Activated CD4-positive, alpha-beta T cell treated with anti-CD3 and anti-CD28 coated beads, Interleukin-2, amount 10 ng/mL, durations not matched to agents 24 days and 14 days (primary cell): ENCODE measurements at regions of chr19 and their contacts with region 1.

Region 1: GRCh38 chr19:32570081-32570785 is 10.8 kb upstream of the PDCD5 start:
- DNase-seq: peak; percentile 83
- H3K4me3 Mint-ChIP-seq: no peak overlapping the region
- H3K27ac Mint-ChIP-seq: no peak overlapping the region
- H3K4me1 Mint-ChIP-seq: peaks cover 7% of the 10 kb centered on the region
- H3K27me3 Mint-ChIP-seq: peaks cover 14% of the 10 kb centered on the region

Region 2: GRCh38 chr19:32339988-32340874 is 230.0 kb before region 1 on chr19:
- intact Hi-C with region 1: loop called (anchors 1 kb)
- DNase-seq: peak; percentile 83
- H3K4me3 Mint-ChIP-seq: no peak overlapping the region
- H3K27ac Mint-ChIP-seq: no peak overlapping the region
- H3K4me1 Mint-ChIP-seq: peaks cover 3% of the 10 kb centered on the region
- H3K27me3 Mint-ChIP-seq: peaks cover 8% of the 10 kb centered on the region

Region 3: DNA sequence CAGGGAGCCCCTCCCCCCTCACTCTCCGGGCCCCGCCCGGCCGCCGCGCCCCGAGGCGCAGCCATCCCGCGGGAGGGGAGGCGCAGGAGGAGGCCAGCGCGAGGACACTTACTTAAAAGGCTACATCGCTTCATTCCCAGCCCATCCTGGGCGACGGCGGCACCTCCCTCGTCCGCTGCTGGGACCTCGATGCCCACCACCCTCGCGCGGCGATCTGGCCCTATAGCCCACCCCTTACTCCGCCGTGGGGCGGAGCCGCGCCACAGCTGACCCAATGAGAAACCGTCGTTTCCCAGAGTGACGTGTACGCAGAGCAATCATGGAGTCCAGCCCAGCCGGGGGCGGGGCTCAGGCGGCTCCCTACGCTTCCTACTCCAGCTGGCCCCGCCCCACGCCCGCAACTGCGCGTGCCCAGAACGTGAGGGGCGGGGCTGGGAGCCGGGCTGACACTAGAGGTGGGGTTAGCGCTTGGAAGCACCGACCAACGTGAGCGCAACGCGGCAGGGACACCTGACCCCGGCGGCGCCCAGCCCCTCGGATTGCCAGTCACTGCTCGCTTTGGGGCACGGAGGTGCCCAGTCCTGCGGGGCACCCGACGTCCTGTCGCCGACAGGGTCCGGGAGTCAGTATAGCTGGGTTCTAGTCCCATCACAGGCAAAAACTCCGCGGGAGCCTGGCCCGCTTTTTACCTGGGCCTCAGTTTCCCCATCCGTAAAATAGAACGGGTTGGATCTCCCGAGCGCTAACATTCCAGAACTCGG is 104.9 kb after region 1 on chr19 and contains the start of gene ANKRD27:
- intact Hi-C with region 1: no loop called
- DNase-seq: peak; percentile 100
- H3K4me3 Mint-ChIP-seq: peak within 1 kb of the TSS; percentile 95
- H3K27ac Mint-ChIP-seq: peak within 1 kb of the TSS; percentile 88
- H3K4me1 Mint-ChIP-seq: peaks cover 24% of the 10 kb centered on the region
- H3K27me3 Mint-ChIP-seq: peaks cover 28% of the 10 kb centered on the region
- total RNA-seq, gene ANKRD27: 34.2 and 35.1 TPM in 2 replicates